Mammary epithelial cell (primary cell): ENCODE measurements at regions of chr15 and their contacts with region 1.

Region 1: GRCh38 chr15:33746203-33746602 is 222.1 kb upstream of the CHRM5 start:
- DNase-seq: no peak
- H3K4me3 ChIP-seq: no peak overlapping the region
- H3K27ac ChIP-seq: no peak overlapping the region
- H3K4me1 ChIP-seq: no peaks in the 10 kb centered on the region
- H3K27me3 ChIP-seq: no peaks in the 10 kb centered on the region
- CTCF ChIP-seq: no peak

Region 2: DNA sequence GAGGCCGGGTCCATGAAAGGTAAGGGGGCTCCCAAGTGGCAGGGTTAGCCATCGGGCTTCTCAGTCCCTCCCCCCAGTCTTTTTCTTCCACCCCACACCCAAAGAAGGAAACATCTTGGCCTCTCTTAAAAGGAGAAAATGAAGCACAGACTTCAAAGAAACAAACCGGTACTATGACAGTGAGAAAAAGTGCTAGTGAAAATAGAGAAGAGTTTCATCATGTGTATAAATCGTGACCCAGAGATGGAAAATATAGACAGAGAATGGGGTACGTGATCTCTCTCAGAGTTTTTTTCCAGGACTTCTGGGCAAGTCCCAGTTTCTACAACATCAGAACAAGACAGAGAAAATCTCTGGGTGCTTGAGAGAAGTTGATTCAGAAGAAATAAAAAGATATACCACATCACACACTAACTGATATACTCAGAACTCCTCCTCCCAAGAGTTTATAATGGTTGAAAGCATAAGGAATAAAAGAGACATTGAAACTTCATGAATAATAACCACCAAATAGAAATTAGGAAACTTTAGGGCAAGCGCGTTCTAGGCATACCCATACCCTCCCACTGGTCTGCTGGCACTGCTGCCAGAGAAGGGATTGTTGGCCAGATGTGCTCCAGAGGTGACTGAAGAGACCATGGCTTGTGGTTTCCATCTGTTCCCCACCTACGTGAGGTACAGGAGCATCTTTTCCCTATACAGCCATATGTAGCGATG is 96.8 kb before region 1 on chr15:
- CTCF ChIA-PET with region 1: no interaction called
- dilution Hi-C with region 1: loop called (anchors 5 kb)
- in situ Hi-C with region 1: no loop called
- intact Hi-C with region 1: no loop called
- DNase-seq: no peak
- H3K4me3 ChIP-seq: no peak overlapping the region
- H3K27ac ChIP-seq: no peak overlapping the region
- H3K4me1 ChIP-seq: no peaks in the 10 kb centered on the region
- H3K27me3 ChIP-seq: no peaks in the 10 kb centered on the region
- CTCF ChIP-seq: no peak